ENCODE measurements at regions of chr17 and their contacts with region 1.

Region 1: DNA sequence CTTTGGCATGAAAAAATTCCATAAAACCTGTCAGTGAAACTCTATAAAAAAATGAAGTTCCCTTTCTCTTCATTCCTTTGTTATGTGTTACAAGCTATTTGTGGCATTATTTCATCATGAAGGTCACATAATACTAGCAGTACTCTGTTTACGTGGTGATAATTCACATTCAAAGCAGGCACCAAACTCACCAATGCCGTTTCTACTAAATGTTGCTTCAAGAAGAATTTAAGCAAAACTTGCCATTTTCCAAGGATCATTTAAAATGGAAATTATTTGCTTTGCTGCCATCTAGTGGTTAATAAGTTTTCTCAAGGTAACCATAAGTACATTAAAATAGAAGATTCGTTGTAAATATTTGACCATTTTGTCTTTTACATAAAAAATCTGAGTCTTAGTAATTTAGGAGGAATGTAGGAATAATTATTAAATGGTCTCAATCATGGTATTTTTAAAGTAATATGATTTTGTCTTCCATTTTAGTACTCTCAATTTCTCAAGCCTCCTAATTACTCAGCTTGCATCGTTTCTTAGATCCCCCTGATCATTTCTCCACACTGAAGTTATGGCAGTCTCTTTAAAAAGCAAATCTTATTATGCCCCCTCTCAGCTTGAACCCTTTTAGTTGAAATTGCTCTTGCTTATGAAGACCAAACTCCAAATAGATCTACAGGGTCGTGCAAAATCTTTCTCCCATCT is 80.8 kb downstream of the OMG start:
- DNase-seq: peak; percentile 21
- CTCF ChIP-seq: peak; percentile 33

Region 2: GRCh38 chr17:31015639-31016038 is 200.6 kb before region 1 on chr17:
- CTCF ChIA-PET with region 1: interaction called, 18 read pairs
- POLR2A ChIA-PET with region 1: no interaction called
- DNase-seq: no peak
- CTCF ChIP-seq: peak; percentile 8

Region 3: DNA sequence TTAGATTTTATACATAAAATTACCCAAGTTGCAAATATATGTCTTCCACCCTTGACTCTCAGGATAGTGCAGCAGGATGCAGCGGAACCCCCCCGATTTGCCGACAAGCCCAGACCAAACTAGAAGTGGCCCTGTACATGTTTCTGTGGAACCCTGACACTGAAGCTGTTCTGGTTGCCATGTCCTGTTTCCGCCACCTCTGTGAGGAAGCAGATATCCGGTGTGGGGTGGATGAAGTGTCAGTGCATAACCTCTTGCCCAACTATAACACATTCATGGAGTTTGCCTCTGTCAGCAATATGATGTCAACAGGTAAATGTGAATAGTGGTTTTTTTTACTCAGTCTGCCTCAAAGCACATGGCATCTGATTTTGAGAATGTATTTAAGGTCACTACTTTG is 10.2 kb after region 1 on chr17:
- CTCF ChIA-PET with region 1: interaction called, 29 read pairs
- POLR2A ChIA-PET with region 1: no interaction called
- DNase-seq: no peak
- CTCF ChIP-seq: no peak